ENCODE measurements at regions of chr14 and their contacts with region 1.

Region 1: DNA sequence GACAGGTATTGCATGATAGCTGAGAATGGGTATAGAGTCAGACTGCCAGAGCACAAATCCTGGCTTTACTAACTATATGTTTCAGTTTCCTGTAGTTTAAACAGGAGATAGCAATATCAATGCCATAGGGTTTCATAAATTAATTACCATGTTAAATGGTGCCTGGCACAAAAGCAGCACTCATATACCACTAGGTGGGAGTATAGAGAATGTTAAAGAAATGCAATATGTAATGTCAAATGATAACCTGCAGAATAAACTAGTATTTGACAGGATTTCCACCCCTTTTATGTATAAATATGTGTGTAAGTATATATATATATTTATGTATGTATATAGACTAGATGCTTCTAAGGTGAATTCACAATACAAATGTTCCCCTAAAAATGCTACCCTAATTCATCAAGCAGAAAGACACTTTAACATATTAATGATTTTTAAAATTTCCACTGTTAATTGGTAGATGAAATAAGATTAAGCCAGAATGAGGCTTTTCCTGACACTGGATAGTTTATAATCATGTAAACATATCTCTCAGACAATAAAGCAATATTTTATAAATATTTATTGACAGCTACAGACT is 8.6 kb downstream of the WDR89 start:
- DNase-seq: no peak
- H3K4me3 ChIP-seq: no peak overlapping the region
- H3K4me3 Mint-ChIP-seq: no peak overlapping the region
- H3K27ac Mint-ChIP-seq: no peak overlapping the region
- H3K4me1 ChIP-seq: no peaks in the 10 kb centered on the region
- H3K4me1 Mint-ChIP-seq: no peaks in the 10 kb centered on the region
- H3K27me3 ChIP-seq: no peaks in the 10 kb centered on the region
- H3K27me3 Mint-ChIP-seq: no peaks in the 10 kb centered on the region
- CTCF ChIP-seq: peak; percentile 44 to 53

Region 2: GRCh38 chr14:63388763-63389431 is 244.1 kb before region 1 on chr14:
- CTCF ChIA-PET with region 1: no interaction called
- POLR2A ChIA-PET with region 1: no interaction called
- intact Hi-C with region 1: loop called (anchors 5 kb)
- DNase-seq: peak; percentile 46 to 57
- H3K4me3 ChIP-seq: no peak overlapping the region
- H3K4me3 Mint-ChIP-seq: no peak overlapping the region
- H3K27ac Mint-ChIP-seq: no peak overlapping the region
- H3K4me1 ChIP-seq: no peaks in the 10 kb centered on the region
- H3K4me1 Mint-ChIP-seq: no peaks in the 10 kb centered on the region
- H3K27me3 ChIP-seq: no peaks in the 10 kb centered on the region
- H3K27me3 Mint-ChIP-seq: no peaks in the 10 kb centered on the region
- CTCF ChIP-seq: peak; percentile 56 to 79

Region 3: DNA sequence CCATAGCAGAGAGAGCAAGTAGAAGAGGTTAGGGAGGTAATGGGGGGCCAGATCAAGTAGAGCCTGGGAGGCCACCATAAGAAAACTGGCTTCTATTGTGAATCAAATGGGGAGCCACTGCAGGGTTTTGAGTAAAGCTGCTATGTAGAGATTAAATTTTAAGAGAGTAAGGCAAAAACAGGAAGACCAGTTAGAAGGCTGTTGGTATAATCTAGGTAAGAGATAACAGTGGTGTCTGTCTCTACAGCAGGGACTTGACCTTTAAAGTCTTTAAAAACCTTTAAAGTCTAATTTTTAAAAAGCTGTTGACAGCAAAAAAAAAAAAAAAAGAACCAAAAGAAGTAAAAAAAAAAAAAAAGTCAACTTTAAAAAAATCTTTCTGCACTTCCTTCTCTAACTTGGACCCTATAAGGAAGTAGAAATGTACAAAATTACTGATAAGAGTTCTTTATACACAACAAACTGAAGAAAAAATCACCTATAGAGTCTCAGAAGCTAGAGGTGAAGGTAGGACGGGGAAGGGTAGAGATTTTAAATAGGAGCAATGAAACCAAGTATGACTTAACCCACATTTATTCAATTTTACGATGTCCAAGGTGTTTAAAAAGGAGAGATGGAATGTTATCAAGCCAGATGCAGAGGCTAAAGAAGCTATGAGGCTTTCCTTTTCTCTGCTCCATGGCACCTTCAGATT is 68.7 kb after region 1 on chr14:
- CTCF ChIA-PET with region 1: no interaction called
- POLR2A ChIA-PET with region 1: no interaction called
- intact Hi-C with region 1: no loop called
- DNase-seq: no peak
- H3K4me3 ChIP-seq: no peak overlapping the region
- H3K4me3 Mint-ChIP-seq: no peak overlapping the region
- H3K27ac Mint-ChIP-seq: no peak overlapping the region
- H3K4me1 ChIP-seq: no peaks in the 10 kb centered on the region
- H3K4me1 Mint-ChIP-seq: peaks cover 7% of the 10 kb centered on the region
- H3K27me3 ChIP-seq: no peaks in the 10 kb centered on the region
- H3K27me3 Mint-ChIP-seq: no peaks in the 10 kb centered on the region
- CTCF ChIP-seq: no peak